GM10248 (cell line): ENCODE measurements at regions of chr18 and their contacts with region 1.

Region 1: DNA sequence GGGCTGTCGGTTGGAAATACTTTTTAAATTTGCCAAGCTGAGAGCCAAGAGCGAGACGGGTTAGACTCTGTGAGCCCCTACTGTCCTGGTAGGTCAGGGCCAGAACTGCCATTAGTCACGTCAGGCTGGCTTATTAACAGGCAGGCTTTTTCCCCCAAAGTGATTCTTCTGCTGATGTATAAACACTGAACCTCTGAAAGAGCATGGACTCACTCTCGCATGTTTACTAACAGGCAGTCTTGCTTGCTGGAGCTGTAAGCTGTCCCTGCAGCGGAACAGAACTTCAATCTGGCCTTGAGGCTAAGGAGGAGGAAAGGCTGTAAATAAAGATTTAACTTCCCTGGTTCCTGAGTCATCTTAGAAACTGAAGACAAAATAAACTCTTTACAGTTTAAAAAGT is 288.4 kb downstream of the PIEZO2 start:
- DNase-seq: no peak
- CTCF ChIP-seq: no peak

Region 2: GRCh38 chr18:10872304-10872703 is 11.4 kb after region 1 on chr18:
- CTCF ChIA-PET with region 1: interaction called, 14 read pairs
- POLR2A ChIA-PET with region 1: no interaction called
- DNase-seq: no peak
- CTCF ChIP-seq: no peak

Region 3: GRCh38 chr18:10896851-10897250 is 35.9 kb after region 1 on chr18:
- CTCF ChIA-PET with region 1: no interaction called
- POLR2A ChIA-PET with region 1: no interaction called
- DNase-seq: no peak
- CTCF ChIP-seq: no peak

Region 4: GRCh38 chr18:11246495-11247300 is 385.8 kb after region 1 on chr18:
- CTCF ChIA-PET with region 1: no interaction called
- POLR2A ChIA-PET with region 1: no interaction called
- DNase-seq: no peak
- CTCF ChIP-seq: no peak